ENCODE measurements at regions of chr3 and their contacts with region 1.

Region 1: DNA sequence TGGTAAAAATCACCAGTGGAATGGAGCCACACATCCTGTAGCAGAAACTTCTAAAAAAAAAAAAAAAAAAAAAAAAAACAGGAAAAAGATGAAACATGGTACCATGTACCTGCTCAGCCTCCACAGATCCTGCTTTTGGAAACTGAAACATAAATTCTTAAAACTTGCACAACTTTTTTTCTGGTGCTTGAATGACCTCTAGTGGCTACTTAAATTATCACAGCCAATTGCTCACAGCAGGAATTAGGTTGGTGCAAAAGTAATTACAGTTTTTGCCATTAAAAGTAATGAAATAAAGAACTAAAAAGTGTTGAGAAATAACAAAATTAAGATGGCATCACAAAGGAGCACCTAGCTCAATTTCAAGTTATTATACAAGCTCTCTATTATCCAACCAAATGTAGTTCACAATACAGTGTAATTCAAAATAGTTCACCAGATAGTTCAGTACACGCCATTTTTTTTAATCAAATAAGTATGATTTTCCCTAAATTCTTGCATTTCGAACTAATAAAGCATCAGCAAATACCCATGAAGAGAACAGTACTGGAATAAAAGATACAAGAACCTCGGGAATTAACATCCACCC is 80.6 kb downstream of the ULK4 start:
- DNase-seq: peak in 1 of 6 donors; percentile 24
- ATAC-seq: peak in 2 of 4 donors; percentile 52 to 57
- H3K4me3 ChIP-seq: no peak overlapping the region
- H3K27ac ChIP-seq: no peak overlapping the region
- H3K4me1 ChIP-seq: no peaks in the 10 kb centered on the region
- H3K27me3 ChIP-seq: no peaks in the 10 kb centered on the region
- CTCF ChIP-seq: peak; percentile 35 to 69 (median 47)

Region 2: GRCh38 chr3:40337136-40338108 is 1543.9 kb before region 1 on chr3:
- intact Hi-C with region 1: loop called in 1 of 3 experiments (anchors 10 kb)
- DNase-seq: no peak
- ATAC-seq: no peak
- H3K4me3 ChIP-seq: no peak overlapping the region
- H3K27ac ChIP-seq: no peak overlapping the region
- H3K4me1 ChIP-seq: peaks cover 0 to 8% (median 0%) of the 10 kb centered on the region in 3 donors
- H3K27me3 ChIP-seq: no peaks in the 10 kb centered on the region
- CTCF ChIP-seq: no peak

Region 3: GRCh38 chr3:40574661-40575060 is 1306.7 kb before region 1 on chr3:
- intact Hi-C with region 1: loop called in 1 of 3 experiments (anchors 5 kb)
- DNase-seq: no peak
- ATAC-seq: no peak
- H3K4me3 ChIP-seq: no peak overlapping the region
- H3K27ac ChIP-seq: no peak overlapping the region
- H3K4me1 ChIP-seq: no peaks in the 10 kb centered on the region
- H3K27me3 ChIP-seq: no peaks in the 10 kb centered on the region
- CTCF ChIP-seq: no peak

Region 4: GRCh38 chr3:40580494-40581091 is 1300.7 kb before region 1 on chr3:
- intact Hi-C with region 1: loop called in 2 of 3 experiments (anchors 5 kb)
- DNase-seq: peak in 5 of 6 donors; percentile 22 to 74 (median 49)
- ATAC-seq: peak; percentile 58 to 79 (median 76)
- H3K4me3 ChIP-seq: no peak overlapping the region
- H3K27ac ChIP-seq: no peak overlapping the region
- H3K4me1 ChIP-seq: no peaks in the 10 kb centered on the region
- H3K27me3 ChIP-seq: no peaks in the 10 kb centered on the region
- CTCF ChIP-seq: peak; percentile 83 to 93 (median 92)

Region 5: DNA sequence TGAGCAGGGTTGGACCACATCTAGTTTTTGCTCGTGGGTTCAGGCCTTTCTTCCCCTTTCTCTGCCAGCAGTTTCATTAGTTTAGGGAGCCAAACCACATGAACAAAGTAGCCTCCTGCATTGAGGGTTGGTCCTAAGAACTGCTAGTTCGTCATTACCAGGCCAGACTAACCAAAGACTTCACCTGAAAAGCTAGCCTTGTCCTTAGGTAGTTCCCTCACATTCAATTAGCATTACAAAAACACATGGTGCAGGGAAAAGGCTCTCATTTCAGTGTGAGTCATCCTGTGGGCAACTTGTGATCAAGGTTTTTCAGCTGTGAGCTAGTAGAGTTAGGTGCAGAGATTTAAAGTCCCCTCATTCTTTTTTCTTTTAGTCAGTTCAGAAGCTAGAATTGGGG is 961.3 kb before region 1 on chr3:
- intact Hi-C with region 1: no loop called
- DNase-seq: no peak
- ATAC-seq: peak in 1 of 4 donors; percentile 15
- H3K4me3 ChIP-seq: no peak overlapping the region
- H3K27ac ChIP-seq: no peak overlapping the region
- H3K4me1 ChIP-seq: peaks cover 0 to 16% (median 5%) of the 10 kb centered on the region in 3 donors
- H3K27me3 ChIP-seq: no peaks in the 10 kb centered on the region
- CTCF ChIP-seq: no peak

Measured in pancreas (tissue), 10 donors.